ENCODE measurements at regions of chr14 and their contacts with region 1.

Region 1: GRCh38 chr14:85250414-85251189 is 279.3 kb upstream of the FLRT2 start:
- DNase-seq: peak; percentile 33 to 42
- H3K4me3 ChIP-seq: no peak overlapping the region
- H3K27ac ChIP-seq: no peak overlapping the region
- H3K4me1 ChIP-seq: no peaks in the 10 kb centered on the region
- H3K27me3 ChIP-seq: no peaks in the 10 kb centered on the region
- CTCF ChIP-seq: no peak

Region 2: GRCh38 chr14:85233756-85234155 is 16.8 kb before region 1 on chr14:
- CTCF ChIA-PET with region 1: no interaction called
- POLR2A ChIA-PET with region 1: no interaction called
- intact Hi-C with region 1: loop called (anchors 2 kb)
- DNase-seq: peak; percentile 29 to 56
- H3K4me3 ChIP-seq: no peak overlapping the region
- H3K27ac ChIP-seq: peak overlapping the region; percentile 47; the same call in 1 of the 2 replicates
- H3K4me1 ChIP-seq: peaks cover 7% of the 10 kb centered on the region; the same call in 1 of the 2 replicates
- H3K27me3 ChIP-seq: no peaks in the 10 kb centered on the region
- CTCF ChIP-seq: no peak

Region 3: GRCh38 chr14:85296456-85297210 is 46.0 kb after region 1 on chr14:
- CTCF ChIA-PET with region 1: no interaction called
- POLR2A ChIA-PET with region 1: no interaction called
- intact Hi-C with region 1: no loop called
- DNase-seq: no peak
- H3K4me3 ChIP-seq: no peak overlapping the region
- H3K27ac ChIP-seq: no peak overlapping the region
- H3K4me1 ChIP-seq: no peaks in the 10 kb centered on the region
- H3K27me3 ChIP-seq: no peaks in the 10 kb centered on the region
- CTCF ChIP-seq: no peak

Region 4: DNA sequence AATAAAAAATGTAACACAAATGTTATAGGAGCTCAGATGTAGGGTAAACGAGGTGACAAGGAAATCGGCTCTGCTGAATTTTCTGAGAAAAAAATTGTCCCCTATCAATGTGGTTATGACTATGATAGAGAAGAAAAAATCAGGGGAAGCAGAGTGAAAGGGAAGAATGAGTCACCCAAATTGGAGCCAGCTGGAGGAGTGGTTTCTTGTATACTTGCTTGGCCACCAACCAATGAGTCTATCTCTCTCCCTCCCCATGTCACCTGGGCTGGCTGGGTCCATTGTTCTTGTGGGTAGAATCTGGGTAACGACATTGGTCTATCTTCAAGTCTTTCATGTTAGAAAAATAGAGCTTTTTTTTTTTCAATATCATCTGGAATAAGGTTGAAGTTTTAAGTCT is 82.7 kb after region 1 on chr14:
- CTCF ChIA-PET with region 1: no interaction called
- POLR2A ChIA-PET with region 1: no interaction called
- intact Hi-C with region 1: no loop called
- DNase-seq: peak in 1 of 2 experiments; percentile 0
- H3K4me3 ChIP-seq: no peak overlapping the region
- H3K27ac ChIP-seq: no peak overlapping the region
- H3K4me1 ChIP-seq: no peaks in the 10 kb centered on the region
- H3K27me3 ChIP-seq: no peaks in the 10 kb centered on the region
- CTCF ChIP-seq: no peak

Region 5: DNA sequence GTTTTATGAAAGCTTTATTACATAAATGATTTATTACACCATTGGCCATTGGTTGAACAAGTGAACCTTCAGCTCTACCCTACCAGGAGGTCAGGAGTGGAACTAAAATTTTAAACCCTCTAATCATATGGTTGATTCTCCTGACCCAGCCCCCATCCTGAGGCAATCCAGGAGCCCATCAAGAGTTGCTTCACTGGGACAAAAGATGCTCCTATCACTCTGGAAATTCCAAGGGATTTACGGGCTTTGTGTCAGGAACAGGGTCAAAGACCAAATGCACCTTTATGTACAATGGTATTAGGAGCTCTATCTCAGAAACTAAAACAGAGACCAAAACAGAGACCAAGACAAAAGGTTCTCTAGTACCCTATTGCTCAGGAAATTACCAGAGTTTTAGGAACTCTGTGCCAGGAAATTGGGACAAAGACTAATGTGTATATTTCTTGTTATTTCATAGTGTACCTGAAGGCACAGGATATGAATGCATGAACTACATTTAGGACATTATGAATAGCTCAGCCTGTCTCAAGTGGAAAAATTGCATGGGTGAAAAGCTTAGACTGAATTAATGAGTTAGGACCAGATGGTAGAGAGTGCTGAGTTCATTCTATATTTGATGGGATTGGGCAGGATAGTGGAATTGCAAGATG is 107.7 kb after region 1 on chr14:
- CTCF ChIA-PET with region 1: no interaction called
- POLR2A ChIA-PET with region 1: no interaction called
- intact Hi-C with region 1: no loop called
- DNase-seq: no peak
- H3K4me3 ChIP-seq: no peak overlapping the region
- H3K27ac ChIP-seq: no peak overlapping the region
- H3K4me1 ChIP-seq: no peaks in the 10 kb centered on the region
- H3K27me3 ChIP-seq: no peaks in the 10 kb centered on the region
- CTCF ChIP-seq: no peak

Region 6: GRCh38 chr14:85415015-85415712 is 164.6 kb after region 1 on chr14:
- CTCF ChIA-PET with region 1: no interaction called
- POLR2A ChIA-PET with region 1: no interaction called
- intact Hi-C with region 1: loop called (anchors 5 kb)
- DNase-seq: peak in 1 of 2 experiments; percentile 27
- H3K4me3 ChIP-seq: no peak overlapping the region
- H3K27ac ChIP-seq: no peak overlapping the region
- H3K4me1 ChIP-seq: no peaks in the 10 kb centered on the region
- H3K27me3 ChIP-seq: no peaks in the 10 kb centered on the region
- CTCF ChIP-seq: no peak

Region 7: DNA sequence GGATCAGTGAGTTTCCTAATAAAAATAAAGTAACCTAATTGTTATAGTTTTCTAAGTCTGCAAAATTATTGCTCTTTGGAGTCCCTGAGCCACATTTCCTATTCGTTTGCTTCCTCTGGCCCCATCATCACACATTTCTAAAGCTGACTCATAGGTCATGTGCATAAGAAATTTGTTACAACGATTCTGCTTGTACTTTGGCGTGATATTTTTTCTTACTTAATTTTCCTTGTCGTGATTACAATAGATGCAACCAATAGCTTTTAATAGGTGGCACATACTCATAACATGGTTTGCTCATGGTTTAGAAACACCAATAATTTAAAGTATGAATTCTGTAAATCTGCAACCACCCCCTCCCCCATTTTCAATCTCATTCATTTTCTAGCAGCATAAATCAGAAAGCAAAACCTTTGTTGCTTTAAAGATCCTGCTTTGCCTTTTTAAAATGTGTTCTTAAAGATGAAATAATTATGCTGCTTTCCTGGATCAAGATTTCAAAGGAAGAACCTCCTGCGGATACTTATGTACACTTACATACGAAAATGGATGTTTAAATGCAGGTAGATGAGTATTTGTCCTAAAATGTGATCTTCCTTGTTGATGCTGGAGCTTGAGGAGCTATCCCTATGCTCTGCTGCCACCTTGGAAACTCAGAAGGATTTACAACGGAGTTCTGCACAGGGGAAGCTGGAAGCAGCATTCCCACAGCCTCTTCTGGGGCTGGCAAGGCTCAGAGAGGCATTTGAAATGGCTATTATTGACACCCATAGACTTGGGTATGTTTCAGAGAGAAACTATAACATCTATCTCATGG is 277.7 kb after region 1 on chr14:
- CTCF ChIA-PET with region 1: no interaction called
- POLR2A ChIA-PET with region 1: interaction called, 9 read pairs
- intact Hi-C with region 1: loop called (anchors 2 kb)
- DNase-seq: peak in 1 of 2 experiments; percentile 18
- H3K4me3 ChIP-seq: peak overlapping the region; percentile 40; the same call in 1 of the 2 replicates
- H3K27ac ChIP-seq: no peak overlapping the region
- H3K4me1 ChIP-seq: no peaks in the 10 kb centered on the region
- H3K27me3 ChIP-seq: peaks cover 31% of the 10 kb centered on the region
- CTCF ChIP-seq: no peak; the same call in 1 of the 2 replicates

Measured in PC-9 (cell line).